ENCODE measurements at regions of chr4 and their contacts with region 1.

Region 1: GRCh38 chr4:76213415-76214176 is at the start of gene SCARB2:
- DNase-seq: peak; percentile 92 to 94
- ATAC-seq: peak; percentile 88 to 92 (median 92)
- H3K4me3 ChIP-seq: peak within 1 kb of the TSS; percentile 95
- H3K27ac ChIP-seq: peak within 1 kb of the TSS; percentile 97
- H3K4me1 ChIP-seq: peaks cover 71% of the 10 kb centered on the region
- H3K27me3 ChIP-seq: no peaks in the 10 kb centered on the region
- CTCF ChIP-seq: no peak
- total RNA-seq, gene SCARB2: 109 to 199 (median 170) TPM

Region 2: DNA sequence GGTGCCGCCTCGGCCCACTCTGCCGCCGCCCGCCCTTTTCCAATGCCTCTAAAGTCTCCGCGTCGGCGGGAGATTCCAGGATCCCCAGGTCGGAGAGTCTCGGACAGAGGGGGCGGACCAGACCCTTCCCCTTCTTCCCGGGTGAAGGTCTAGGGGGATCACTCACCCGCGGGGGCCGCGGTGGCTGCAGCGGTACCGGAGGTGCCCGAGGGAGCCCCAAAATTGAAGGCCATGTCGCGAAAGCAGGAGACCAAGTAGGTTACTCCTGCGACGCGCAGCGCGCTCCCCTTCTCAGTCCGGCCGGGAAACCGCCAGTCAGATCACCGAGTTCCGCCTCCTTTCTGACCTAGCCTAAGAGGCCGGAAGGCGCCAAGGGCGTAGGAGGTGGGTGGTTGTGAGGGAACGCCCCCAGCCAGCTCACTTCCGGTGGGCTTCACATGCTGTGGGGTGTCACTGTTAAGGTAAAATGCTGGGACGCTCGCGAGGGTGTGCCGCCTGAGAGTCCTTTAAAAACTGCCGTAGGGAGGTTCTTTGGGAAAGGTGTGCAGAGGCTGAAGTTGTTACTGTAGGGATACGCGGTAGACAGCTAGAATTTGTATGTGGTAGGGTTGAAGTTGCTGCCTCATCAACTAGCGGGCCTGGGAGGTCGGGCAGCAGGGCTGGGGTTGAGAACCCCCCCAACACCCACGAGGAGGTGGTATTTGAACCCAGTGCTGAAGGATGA is 65.3 kb before region 1 on chr4 and contains the start of gene NUP54:
- intact Hi-C with region 1: loop called in 1 of 2 experiments (anchors 5 kb)
- DNase-seq: peak; percentile 93 to 97
- ATAC-seq: peak; percentile 99
- H3K4me3 ChIP-seq: peak within 1 kb of the TSS; percentile 89
- H3K27ac ChIP-seq: peak within 1 kb of the TSS; percentile 91
- H3K4me1 ChIP-seq: peaks cover 24% of the 10 kb centered on the region
- H3K27me3 ChIP-seq: no peaks in the 10 kb centered on the region
- CTCF ChIP-seq: no peak
- total RNA-seq, gene NUP54: 14.1 to 25.9 (median 17.6) TPM

Region 3: DNA sequence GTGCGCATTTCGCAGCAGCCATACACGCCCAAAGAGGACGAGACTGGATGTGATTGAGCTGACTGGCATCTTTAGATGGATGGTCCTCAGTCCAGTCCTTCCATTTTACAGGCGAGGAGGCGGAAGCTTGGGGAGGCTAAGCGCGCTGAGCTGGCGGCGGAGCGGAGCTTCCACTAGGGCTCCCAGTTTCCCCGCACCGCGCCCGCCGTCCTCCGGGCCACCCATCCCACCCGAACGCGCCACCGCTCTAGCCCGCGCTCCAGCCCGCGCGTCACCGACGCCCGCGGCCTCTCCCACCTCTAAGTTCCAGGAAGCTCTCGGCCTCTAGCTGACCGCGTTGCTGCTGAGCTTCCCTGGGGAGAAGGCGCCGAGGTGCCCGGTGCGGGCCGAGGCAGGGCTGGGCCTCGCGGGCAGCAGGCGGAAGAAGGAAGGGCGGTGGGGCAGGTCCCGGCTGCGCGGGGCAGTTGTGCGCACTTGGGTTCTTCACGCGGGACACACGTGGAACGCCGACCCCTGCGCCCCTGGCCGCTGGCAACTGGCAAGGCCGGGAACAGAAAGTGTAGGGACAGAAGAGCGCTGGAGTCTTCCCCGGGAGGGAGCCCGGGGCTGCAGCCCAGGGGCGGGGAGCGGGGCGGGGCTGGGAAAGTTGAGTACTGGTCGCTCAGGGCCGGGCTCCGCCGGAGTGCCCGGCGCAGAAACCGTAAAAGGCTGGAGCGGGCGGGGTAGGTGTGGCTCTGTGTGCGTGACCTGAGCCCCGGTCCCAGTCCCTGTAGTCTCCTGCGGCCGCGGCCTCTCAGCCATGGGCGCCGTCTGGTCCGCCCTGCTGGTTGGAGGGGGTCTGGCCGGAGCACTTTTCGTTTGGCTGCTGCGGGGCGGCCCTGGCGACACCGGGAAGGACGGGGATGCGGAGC is 92.6 kb after region 1 on chr4 and contains the start of gene STBD1:
- intact Hi-C with region 1: loop called in 1 of 2 experiments (anchors 5 kb)
- DNase-seq: peak; percentile 83 to 90
- ATAC-seq: peak; percentile 81 to 85 (median 84)
- H3K4me3 ChIP-seq: peak within 1 kb of the TSS; percentile 97
- H3K27ac ChIP-seq: peak within 1 kb of the TSS; percentile 98
- H3K4me1 ChIP-seq: peaks cover 66% of the 10 kb centered on the region
- H3K27me3 ChIP-seq: no peaks in the 10 kb centered on the region
- CTCF ChIP-seq: no peak
- total RNA-seq, gene STBD1: 39.8 to 59.7 (median 47.2) TPM

Measured in psoas muscle (tissue), 8 donors.